Gastrocnemius medialis (tissue), 4 donors: ENCODE measurements at regions of chr12 and their contacts with region 1.

Region 1: DNA sequence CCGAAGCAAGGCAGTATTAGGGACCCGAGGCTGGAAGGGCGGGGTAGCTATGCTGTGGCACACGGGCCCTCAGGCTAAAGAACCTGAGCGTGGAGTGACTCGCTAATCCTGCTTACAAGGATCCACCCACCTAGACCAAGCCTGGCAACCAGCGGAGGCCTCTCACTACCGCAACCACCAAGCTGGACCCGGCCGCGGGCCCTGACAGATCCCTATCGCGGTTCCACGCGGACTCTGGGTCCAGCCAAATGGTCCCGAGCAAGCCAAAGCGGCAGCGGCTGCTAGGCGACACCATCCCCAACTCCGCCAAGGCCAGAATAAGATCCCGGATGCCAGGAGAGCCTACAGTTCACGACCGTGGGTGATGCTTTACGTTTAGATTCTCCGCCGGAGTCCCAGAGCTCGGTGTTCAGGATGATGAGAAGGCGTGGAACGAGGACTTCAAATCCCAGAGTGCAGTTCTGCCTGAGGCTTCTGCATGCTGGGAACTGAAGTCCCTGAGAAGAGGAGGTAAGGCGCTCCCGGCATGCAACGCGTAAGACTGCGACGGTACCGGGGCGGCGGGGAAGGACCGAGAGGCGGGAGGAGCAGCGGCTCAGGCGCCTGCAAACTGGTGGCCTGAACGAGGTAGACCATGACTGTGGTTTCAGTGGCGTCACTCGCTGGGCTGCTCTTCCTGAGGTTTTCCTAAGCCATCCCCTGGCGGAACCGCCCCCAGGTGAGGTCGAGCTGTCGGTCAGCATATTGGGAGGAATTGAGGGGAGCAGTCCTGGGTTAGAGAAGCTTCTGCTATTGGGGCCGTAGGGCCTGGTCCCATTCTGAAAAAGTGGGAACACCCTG is at the starts of genes CEP290 and TMTC3:
- DNase-seq: peak; percentile 94 to 97
- ATAC-seq: peak; percentile 100
- H3K4me3 ChIP-seq: peak within 1 kb of the TSS; percentile 66 to 85 (median 74)
- H3K27ac ChIP-seq: peak within 1 kb of the TSS; percentile 68 to 81 (median 78)
- H3K4me1 ChIP-seq: peaks cover 13 to 18% of the 10 kb centered on the region in 2 donors
- H3K27me3 ChIP-seq: no peaks in the 10 kb centered on the region
- CTCF ChIP-seq: no peak
- POLR2A ChIP-seq: peak; percentile 42 to 61
- total RNA-seq, gene CEP290: 2.5 to 9.4 (median 5.0) TPM
- total RNA-seq, gene TMTC3: 4.9 to 15.9 (median 6.6) TPM

Region 2: GRCh38 chr12:88035271-88035906 is 106.6 kb before region 1 on chr12:
- in situ Hi-C with region 1: no loop called
- intact Hi-C with region 1: loop called (anchors 1 kb)
- DNase-seq: peak; percentile 81 to 82
- ATAC-seq: peak; percentile 94 to 96
- H3K4me3 ChIP-seq: peak overlapping the region; percentile 81 to 91 (median 86)
- H3K27ac ChIP-seq: peak overlapping the region; percentile 79 to 93 (median 86)
- H3K4me1 ChIP-seq: peaks cover 26 to 28% of the 10 kb centered on the region in 2 donors
- H3K27me3 ChIP-seq: no peaks in the 10 kb centered on the region
- CTCF ChIP-seq: no peak
- POLR2A ChIP-seq: peak; percentile 80 to 81

Region 3: GRCh38 chr12:88580051-88580871 is 438.3 kb after region 1 on chr12 and contains the start of gene KITLG:
- in situ Hi-C with region 1: no loop called
- intact Hi-C with region 1: loop called (anchors 10 kb)
- DNase-seq: peak; percentile 48 to 58
- ATAC-seq: peak; percentile 79 to 83
- H3K4me3 ChIP-seq: peak within 1 kb of the TSS; percentile 67 to 88 (median 79)
- H3K27ac ChIP-seq: peak within 1 kb of the TSS; percentile 56 to 76 (median 64)
- H3K4me1 ChIP-seq: peaks cover 8 to 20% of the 10 kb centered on the region in 2 donors
- H3K27me3 ChIP-seq: no peaks in the 10 kb centered on the region
- CTCF ChIP-seq: peak in 3 of 5 experiments; percentile 31 to 36 (median 34)
- POLR2A ChIP-seq: peak; percentile 47 to 67
- total RNA-seq, gene KITLG: 3.9 to 7.1 (median 4.6) TPM

Region 4: GRCh38 chr12:88993651-88994050 is 851.7 kb after region 1 on chr12:
- in situ Hi-C with region 1: loop called in 1 of 4 experiments (anchors 25 kb)
- intact Hi-C with region 1: no loop called
- DNase-seq: no peak
- ATAC-seq: peak; percentile 44 to 60
- H3K4me3 ChIP-seq: no peak overlapping the region
- H3K27ac ChIP-seq: no peak overlapping the region
- H3K4me1 ChIP-seq: no peaks in the 10 kb centered on the region
- H3K27me3 ChIP-seq: no peaks in the 10 kb centered on the region
- CTCF ChIP-seq: peak in 4 of 5 experiments; percentile 45 to 62 (median 60)
- POLR2A ChIP-seq: no peak

Region 5: DNA sequence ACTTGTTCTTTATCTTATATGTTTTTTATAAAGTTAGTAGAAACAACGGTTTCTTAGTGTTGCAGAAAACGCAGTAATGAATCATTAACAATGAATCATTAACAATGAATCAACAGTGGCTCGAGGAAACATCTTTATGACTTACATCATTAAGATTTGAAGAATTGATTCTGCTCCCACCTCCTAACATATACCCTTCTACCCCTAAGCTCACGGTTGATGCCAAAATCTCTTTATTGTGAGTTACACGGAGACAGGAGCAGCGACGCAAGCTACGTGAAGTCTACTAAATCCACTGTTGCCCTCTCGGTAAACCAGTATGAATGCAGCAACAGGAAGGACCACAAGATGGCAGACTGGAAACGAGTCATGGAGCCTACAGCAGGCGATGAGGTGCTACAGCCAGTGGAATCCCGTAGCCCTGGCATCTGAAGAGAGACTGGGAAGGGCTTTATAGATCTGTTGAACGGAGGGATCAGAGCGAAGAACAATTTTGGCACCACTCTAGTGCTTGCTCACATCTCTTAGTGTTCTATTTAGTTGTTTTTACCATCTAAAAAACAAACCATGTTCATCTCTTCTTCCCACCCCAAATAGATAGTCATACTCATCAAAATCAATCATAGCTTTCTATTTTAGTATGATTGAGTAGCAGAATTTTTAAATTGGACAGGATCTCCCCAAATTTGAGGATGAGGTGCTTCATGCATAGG is 877.6 kb after region 1 on chr12:
- in situ Hi-C with region 1: loop called in 1 of 4 experiments (anchors 25 kb)
- intact Hi-C with region 1: no loop called
- DNase-seq: peak; percentile 55 to 59
- ATAC-seq: peak; percentile 90 to 92
- H3K4me3 ChIP-seq: peak overlapping the region; percentile 21 to 42 (median 36)
- H3K27ac ChIP-seq: no peak overlapping the region
- H3K4me1 ChIP-seq: peaks cover 0 to 6% of the 10 kb centered on the region in 2 donors
- H3K27me3 ChIP-seq: no peaks in the 10 kb centered on the region
- CTCF ChIP-seq: peak; percentile 48 to 83 (median 77)
- POLR2A ChIP-seq: no peak

Region 6: DNA sequence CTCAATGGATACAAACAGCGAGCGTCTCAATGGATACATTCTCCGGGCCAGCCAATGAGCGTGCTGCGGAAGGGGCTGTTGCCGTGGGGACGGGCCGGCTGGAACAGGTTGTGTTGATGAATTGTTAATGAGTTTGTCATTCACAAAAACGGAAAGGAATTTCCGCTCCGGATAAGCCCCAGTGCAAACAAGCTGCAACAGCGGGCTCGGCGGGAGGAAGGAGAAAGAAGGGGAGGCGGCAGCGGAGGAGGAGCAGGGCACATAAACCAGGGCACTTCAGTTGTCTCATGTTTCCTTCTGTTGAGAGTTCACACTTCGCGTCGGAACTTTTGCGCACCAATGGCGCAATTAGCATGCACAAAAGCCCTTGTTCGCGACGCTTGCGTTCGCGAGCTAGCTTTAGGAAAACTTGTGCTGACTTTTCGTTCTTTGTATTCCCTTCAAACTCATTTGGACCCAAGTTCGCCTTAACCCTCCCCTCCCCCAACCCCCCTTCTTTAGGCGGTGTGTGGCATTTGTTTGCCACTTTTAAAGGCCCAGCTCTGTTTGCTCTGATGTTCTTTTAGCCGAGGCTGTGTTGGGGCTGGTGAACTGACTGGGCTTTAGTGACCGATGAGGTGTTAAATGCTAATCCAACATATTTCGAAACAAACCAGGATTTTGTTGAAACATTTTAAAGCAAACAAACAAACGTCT is 1210.7 kb after region 1 on chr12 and contains the start of gene DUSP6:
- in situ Hi-C with region 1: no loop called
- intact Hi-C with region 1: loop called (anchors 5 kb)
- DNase-seq: peak; percentile 75 to 80
- ATAC-seq: peak; percentile 66 to 67
- H3K4me3 ChIP-seq: peak within 1 kb of the TSS; percentile 71 to 77 (median 74)
- H3K27ac ChIP-seq: peak within 1 kb of the TSS; percentile 78 to 85 (median 82)
- H3K4me1 ChIP-seq: peaks cover 4 to 32% of the 10 kb centered on the region in 2 donors
- H3K27me3 ChIP-seq: peaks cover 50 to 88% (median 77%) of the 10 kb centered on the region in 3 donors
- CTCF ChIP-seq: no peak
- POLR2A ChIP-seq: peak; percentile 37 to 54
- total RNA-seq, gene DUSP6: 4.2 to 23.8 (median 12.1) TPM

Region 7: DNA sequence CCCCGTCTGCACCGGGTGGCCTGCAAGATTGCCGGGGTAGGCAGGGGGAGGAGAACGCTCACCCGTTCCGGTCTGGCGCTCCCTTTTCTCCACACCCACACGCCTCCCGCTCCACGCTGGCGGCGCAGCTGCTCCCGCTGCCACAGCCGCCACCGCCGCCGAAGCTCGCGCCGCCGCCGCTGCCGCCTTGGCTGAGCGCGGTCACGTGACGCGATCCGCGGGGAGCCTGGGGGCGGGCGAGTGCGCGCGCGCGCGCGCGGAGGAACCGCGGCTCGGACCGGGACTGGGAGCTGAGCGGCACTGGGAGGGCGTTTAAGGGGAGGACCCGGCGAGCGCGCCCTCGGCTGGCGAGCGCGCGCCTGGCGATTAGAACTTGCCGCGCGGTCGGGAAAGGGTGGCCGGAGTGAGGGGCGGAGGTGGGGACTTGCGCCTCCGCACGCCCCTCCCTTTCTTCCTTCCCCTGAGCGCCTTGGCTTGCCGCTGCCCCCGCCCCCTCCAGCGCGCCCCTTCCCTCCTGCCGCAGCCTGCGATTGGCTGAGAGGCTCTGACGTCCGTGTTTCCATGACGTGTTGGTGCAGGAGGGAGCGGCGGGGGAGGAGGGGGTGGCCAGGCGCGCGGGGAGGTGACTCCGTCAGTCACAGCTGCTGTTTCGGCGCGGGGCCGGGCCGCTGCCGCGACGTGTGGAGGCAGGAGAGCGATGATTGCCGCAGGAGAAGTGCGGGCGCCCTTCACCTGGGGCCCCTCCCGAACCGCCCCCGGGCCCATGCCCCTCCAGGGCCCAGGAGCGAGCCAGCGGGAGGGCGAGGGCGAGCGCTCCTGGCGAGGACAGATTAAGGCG is 1567.4 kb after region 1 on chr12:
- in situ Hi-C with region 1: no loop called
- intact Hi-C with region 1: loop called (anchors 10 kb)
- DNase-seq: peak; percentile 98 to 99
- ATAC-seq: peak; percentile 82 to 84
- H3K4me3 ChIP-seq: peak overlapping the region; percentile 76 to 96 (median 92)
- H3K27ac ChIP-seq: peak overlapping the region; percentile 97 to 99 (median 98)
- H3K4me1 ChIP-seq: peaks cover 18 to 34% of the 10 kb centered on the region in 2 donors
- H3K27me3 ChIP-seq: no peaks in the 10 kb centered on the region
- CTCF ChIP-seq: peak in 2 of 5 experiments; percentile 42 to 59
- POLR2A ChIP-seq: peak; percentile 97 to 98